ENCODE measurements at regions of chr5 and their contacts with region 1.

Region 1: DNA sequence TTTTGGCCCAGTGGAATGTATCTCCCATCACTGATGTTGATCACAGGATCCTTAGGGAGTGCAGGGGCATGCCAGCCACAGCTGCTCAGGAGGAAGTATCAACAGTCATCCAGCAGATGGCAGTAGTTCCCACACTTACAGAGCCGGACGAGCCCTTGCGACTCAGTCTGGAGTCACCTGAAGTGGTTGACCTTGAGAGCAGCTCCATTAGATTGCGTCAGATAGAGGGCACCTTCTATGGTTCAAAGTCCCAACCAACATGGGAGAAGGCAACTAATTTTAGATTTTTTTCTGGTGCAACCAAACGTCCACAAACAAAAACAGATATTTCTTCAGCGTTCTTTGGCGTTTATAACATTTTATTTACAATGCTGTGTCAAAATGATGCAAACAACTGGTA is 124.5 kb downstream of the EGFLAM start:
- DNase-seq: peak; percentile 80
- ATAC-seq: peak; percentile 100
- H3K4me3 ChIP-seq: no peak overlapping the region
- H3K27ac ChIP-seq: no peak overlapping the region
- H3K4me1 ChIP-seq: no peaks in the 10 kb centered on the region
- H3K27me3 ChIP-seq: peaks cover 20% of the 10 kb centered on the region; the same call in 1 of the 2 replicates
- CTCF ChIP-seq: peak; percentile 64 to 86 (median 84); a peak in 5 of 6 replicates
- POLR2A ChIP-seq: no peak
- RAD21 ChIP-seq: peak; percentile 76

Region 2: DNA sequence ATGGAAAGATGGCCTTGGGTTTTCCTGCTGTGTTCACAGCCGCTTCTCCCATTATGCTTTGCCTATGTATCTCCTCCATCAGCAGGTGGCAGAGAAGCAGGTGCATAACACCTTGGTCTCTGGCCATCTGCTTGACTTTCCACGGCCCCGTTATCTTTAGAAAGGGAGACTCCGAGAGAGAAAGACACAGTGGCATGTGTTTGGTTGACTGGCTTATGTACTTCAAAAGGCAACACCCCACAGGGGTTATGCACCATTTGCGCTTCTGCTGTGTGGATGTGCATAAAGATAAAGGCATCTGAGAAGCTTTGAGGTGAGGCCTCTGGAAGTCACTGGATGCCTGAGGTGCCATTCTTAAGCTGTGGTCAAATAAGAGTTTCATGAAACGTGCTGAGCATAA is 13.9 kb after region 1 on chr5:
- CTCF ChIA-PET with region 1: interaction called, 16 read pairs
- POLR2A ChIA-PET with region 1: no interaction called
- RAD21 ChIA-PET with region 1: no interaction called
- intact Hi-C with region 1: no loop called
- DNase-seq: no peak
- ATAC-seq: no peak
- H3K4me3 ChIP-seq: no peak overlapping the region
- H3K27ac ChIP-seq: no peak overlapping the region
- H3K4me1 ChIP-seq: no peaks in the 10 kb centered on the region
- H3K27me3 ChIP-seq: peaks cover 19% of the 10 kb centered on the region; the same call in 1 of the 2 replicates
- CTCF ChIP-seq: no peak
- POLR2A ChIP-seq: no peak
- RAD21 ChIP-seq: no peak

Region 3: GRCh38 chr5:38404667-38405276 is 21.9 kb after region 1 on chr5:
- CTCF ChIA-PET with region 1: interaction called, 6 read pairs
- POLR2A ChIA-PET with region 1: no interaction called
- RAD21 ChIA-PET with region 1: no interaction called
- intact Hi-C with region 1: loop called (anchors 1 kb)
- DNase-seq: peak; percentile 37
- ATAC-seq: peak; percentile 84
- H3K4me3 ChIP-seq: no peak overlapping the region
- H3K27ac ChIP-seq: no peak overlapping the region
- H3K4me1 ChIP-seq: no peaks in the 10 kb centered on the region
- H3K27me3 ChIP-seq: peaks cover 17% of the 10 kb centered on the region; the same call in 1 of the 2 replicates
- CTCF ChIP-seq: peak; percentile 61 to 63 (median 62); a peak in 5 of 6 replicates
- POLR2A ChIP-seq: no peak
- RAD21 ChIP-seq: peak; percentile 71

Region 4: GRCh38 chr5:38420691-38421390 is 37.9 kb after region 1 on chr5:
- CTCF ChIA-PET with region 1: interaction called, 12 read pairs
- POLR2A ChIA-PET with region 1: no interaction called
- RAD21 ChIA-PET with region 1: no interaction called
- intact Hi-C with region 1: no loop called
- DNase-seq: peak; percentile 60
- ATAC-seq: peak; percentile 96
- H3K4me3 ChIP-seq: no peak overlapping the region
- H3K27ac ChIP-seq: no peak overlapping the region
- H3K4me1 ChIP-seq: peaks cover 0 to 9% of the 10 kb centered on the region in 2 experiments; a peak in 1 of 4 replicates
- H3K27me3 ChIP-seq: 0 out of 2 replicates have a peak, but pooled peaks cover 5% of the 10 kb centered on the region
- CTCF ChIP-seq: peak; percentile 58 to 86 (median 80); a peak in 5 of 6 replicates
- POLR2A ChIP-seq: no peak
- RAD21 ChIP-seq: peak; percentile 77

Region 5: GRCh38 chr5:38666668-38667498 is 284.0 kb after region 1 on chr5:
- CTCF ChIA-PET with region 1: no interaction called
- POLR2A ChIA-PET with region 1: no interaction called
- RAD21 ChIA-PET with region 1: no interaction called
- intact Hi-C with region 1: loop called (anchors 2 kb)
- DNase-seq: peak; percentile 19
- ATAC-seq: peak; percentile 97
- H3K4me3 ChIP-seq: no peak overlapping the region
- H3K27ac ChIP-seq: no peak overlapping the region
- H3K4me1 ChIP-seq: no peaks in the 10 kb centered on the region
- H3K27me3 ChIP-seq: no peaks in the 10 kb centered on the region
- CTCF ChIP-seq: peak; percentile 67 to 80 (median 75); a peak in 5 of 6 replicates
- POLR2A ChIP-seq: no peak
- RAD21 ChIP-seq: peak; percentile 90

Measured in HCT116 (cell line).